B cell (primary cell): ENCODE measurements at regions of chr10 and their contacts with region 1.

Region 1: DNA sequence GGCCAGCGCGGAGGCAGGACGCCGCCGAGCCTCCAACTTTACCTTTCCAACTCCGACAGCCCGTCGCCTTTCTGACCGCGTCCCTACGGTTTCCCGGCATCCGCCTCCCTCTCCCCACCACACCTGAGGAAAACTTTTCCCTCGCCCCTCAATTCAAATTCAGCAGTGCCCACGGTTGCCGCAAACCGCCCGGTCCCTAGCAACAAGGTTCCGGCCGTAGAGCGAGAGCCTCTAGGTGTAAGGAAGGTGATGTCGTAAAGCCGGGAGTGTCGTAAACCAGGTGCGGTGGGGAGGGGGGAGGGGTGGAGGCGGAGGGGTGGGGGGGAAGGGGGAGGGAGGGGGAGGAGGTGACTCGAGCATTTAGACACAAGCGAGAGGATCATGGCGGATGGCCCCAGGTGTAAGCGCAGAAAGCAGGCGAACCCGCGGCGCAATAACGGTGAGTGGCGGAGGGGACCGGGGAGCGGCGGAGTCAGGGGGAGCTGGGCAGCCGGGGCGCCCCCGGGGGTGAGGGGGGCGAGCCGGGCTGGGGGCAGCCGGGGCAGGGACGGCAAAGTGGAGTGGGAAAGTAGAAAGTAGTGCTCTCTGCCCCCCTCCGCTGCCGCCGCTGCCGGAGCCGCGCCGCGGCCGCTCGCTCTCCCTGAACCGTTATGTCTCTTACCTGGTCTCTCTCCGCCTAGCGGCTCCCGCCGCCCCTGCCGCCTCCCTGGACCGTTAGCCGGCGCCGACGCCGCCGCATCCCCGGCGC is at the start of gene ZEB1:
- DNase-seq: peak; percentile 95
- ATAC-seq: peak; percentile 54
- H3K4me3 ChIP-seq: peak within 1 kb of the TSS; percentile 63 to 95 (median 89)
- H3K4me3 Mint-ChIP-seq: peak within 1 kb of the TSS; percentile 96
- H3K27ac ChIP-seq: peak within 1 kb of the TSS; percentile 89 to 97
- H3K27ac Mint-ChIP-seq: peak within 1 kb of the TSS; percentile 98
- H3K4me1 ChIP-seq: peaks cover 13 to 16% of the 10 kb centered on the region in 2 donors
- H3K4me1 Mint-ChIP-seq: peaks cover 36% of the 10 kb centered on the region
- H3K27me3 ChIP-seq: no peaks in the 10 kb centered on the region
- H3K27me3 Mint-ChIP-seq: no peaks in the 10 kb centered on the region
- CTCF ChIP-seq: peak; percentile 29
- total RNA-seq, gene ZEB1: 96.7 and 107 TPM in 2 replicates

Region 2: DNA sequence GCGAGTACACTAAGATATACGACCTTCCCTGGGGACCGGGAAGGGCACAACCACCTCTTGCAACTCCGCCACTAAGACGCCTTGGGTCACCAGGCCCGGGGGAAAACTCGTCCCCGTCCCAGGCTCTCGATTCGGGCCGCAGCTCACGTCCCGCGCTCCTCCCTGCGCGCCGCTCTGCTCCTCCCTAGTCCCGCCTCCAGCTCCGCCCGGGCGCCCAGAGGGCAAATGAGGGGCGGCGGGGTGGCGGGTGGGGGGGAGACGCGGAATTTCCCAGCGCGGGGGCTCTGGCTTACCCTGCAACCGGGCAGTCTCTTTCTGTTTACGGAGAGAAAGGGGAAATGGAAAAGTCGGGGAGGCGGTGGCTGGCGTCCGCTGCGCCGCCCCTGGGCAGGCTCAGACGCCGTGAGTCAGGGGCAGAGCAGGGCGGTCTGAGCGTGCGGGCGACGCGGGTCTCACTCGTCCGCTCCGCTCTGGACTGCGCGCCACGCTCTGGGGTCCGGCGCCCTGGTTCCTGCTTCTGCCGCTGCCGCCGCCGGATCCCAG is 885.2 kb before region 1 on chr10 and contains the start of gene MAP3K8:
- CTCF ChIA-PET with region 1: no interaction called
- POLR2A ChIA-PET with region 1: no interaction called
- intact Hi-C with region 1: loop called (anchors 5 kb)
- DNase-seq: peak; percentile 96
- ATAC-seq: peak; percentile 73
- H3K4me3 ChIP-seq: peak within 1 kb of the TSS; percentile 93 to 99 (median 97)
- H3K4me3 Mint-ChIP-seq: peak within 1 kb of the TSS; percentile 98
- H3K27ac ChIP-seq: peak within 1 kb of the TSS; percentile 95 to 99
- H3K27ac Mint-ChIP-seq: peak within 1 kb of the TSS; percentile 97
- H3K4me1 ChIP-seq: peaks cover 56 to 74% of the 10 kb centered on the region in 2 donors
- H3K4me1 Mint-ChIP-seq: peaks cover 71% of the 10 kb centered on the region
- H3K27me3 ChIP-seq: no peaks in the 10 kb centered on the region
- H3K27me3 Mint-ChIP-seq: no peaks in the 10 kb centered on the region
- CTCF ChIP-seq: no peak
- total RNA-seq, gene MAP3K8: 97.0 and 104 TPM in 2 replicates

Region 3: DNA sequence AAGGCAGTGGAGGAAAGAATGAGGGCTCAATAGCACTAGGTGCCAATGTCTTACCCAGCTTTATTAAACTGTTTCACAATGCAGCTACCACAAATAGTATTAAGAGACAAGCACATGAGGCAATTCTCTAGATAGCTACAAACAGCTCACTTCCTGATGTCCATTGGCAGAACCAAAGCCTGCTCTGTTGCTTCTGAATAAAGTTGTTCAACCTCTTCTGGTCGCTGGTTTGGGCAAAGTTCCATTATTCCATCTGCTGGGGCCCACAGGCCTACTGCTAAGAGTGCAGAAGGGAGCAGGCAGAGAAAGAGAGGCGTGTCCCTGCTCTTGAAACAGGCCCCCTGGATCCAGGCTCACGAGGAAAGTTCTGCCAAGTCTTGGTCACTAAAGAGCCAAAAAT is 461.2 kb before region 1 on chr10:
- CTCF ChIA-PET with region 1: no interaction called
- POLR2A ChIA-PET with region 1: no interaction called
- intact Hi-C with region 1: no loop called
- DNase-seq: no peak
- ATAC-seq: no peak
- H3K4me3 ChIP-seq: no peak overlapping the region
- H3K4me3 Mint-ChIP-seq: no peak overlapping the region
- H3K27ac ChIP-seq: no peak overlapping the region
- H3K27ac Mint-ChIP-seq: no peak overlapping the region
- H3K4me1 ChIP-seq: no peaks in the 10 kb centered on the region
- H3K4me1 Mint-ChIP-seq: no peaks in the 10 kb centered on the region
- H3K27me3 ChIP-seq: no peaks in the 10 kb centered on the region
- H3K27me3 Mint-ChIP-seq: no peaks in the 10 kb centered on the region
- CTCF ChIP-seq: no peak

Region 4: DNA sequence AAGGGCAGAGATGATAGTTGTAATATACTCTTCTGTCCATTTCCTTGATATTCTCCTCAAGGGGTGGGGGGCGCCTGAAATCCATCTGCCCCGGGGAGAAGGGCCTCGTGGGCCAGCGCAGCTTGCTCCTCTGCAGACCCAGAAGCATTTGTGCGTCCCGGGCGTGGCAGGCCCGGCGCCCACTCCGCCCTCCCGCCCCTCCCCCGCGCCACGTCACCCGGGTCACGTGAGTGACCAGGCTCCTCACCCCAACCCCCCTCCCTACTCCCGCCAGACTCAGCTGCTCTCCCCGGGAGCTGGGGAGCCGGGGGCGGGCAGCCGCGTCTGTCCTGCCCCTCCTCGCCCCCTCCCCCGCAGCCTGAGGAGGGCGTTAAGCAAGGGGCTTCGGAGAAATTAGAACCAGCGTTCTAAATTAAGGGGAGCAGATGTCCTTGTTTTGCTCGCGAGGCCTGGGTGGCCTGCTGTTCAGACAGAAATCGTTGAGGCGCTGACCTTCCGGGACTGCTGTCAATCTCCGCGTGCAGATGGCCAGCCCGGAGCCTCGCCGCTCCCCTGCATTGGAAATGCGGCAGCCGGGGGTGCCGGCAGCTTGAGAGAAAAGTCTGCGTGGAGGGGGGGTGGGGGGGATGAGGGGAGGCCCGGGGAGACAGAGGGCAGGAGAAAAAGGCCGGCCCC is 185.3 kb before region 1 on chr10:
- CTCF ChIA-PET with region 1: no interaction called
- POLR2A ChIA-PET with region 1: interaction called, 6 read pairs
- intact Hi-C with region 1: loop called (anchors 1 kb)
- DNase-seq: peak; percentile 84
- ATAC-seq: peak; percentile 79
- H3K4me3 ChIP-seq: peak overlapping the region; percentile 24 to 91 (median 75)
- H3K4me3 Mint-ChIP-seq: peak overlapping the region; percentile 88
- H3K27ac ChIP-seq: peak overlapping the region; percentile 26 to 64
- H3K27ac Mint-ChIP-seq: peak overlapping the region; percentile 63
- H3K4me1 ChIP-seq: peaks cover 8 to 13% of the 10 kb centered on the region in 2 donors
- H3K4me1 Mint-ChIP-seq: peaks cover 24% of the 10 kb centered on the region
- H3K27me3 ChIP-seq: no peaks in the 10 kb centered on the region
- H3K27me3 Mint-ChIP-seq: no peaks in the 10 kb centered on the region
- CTCF ChIP-seq: no peak

Region 5: DNA sequence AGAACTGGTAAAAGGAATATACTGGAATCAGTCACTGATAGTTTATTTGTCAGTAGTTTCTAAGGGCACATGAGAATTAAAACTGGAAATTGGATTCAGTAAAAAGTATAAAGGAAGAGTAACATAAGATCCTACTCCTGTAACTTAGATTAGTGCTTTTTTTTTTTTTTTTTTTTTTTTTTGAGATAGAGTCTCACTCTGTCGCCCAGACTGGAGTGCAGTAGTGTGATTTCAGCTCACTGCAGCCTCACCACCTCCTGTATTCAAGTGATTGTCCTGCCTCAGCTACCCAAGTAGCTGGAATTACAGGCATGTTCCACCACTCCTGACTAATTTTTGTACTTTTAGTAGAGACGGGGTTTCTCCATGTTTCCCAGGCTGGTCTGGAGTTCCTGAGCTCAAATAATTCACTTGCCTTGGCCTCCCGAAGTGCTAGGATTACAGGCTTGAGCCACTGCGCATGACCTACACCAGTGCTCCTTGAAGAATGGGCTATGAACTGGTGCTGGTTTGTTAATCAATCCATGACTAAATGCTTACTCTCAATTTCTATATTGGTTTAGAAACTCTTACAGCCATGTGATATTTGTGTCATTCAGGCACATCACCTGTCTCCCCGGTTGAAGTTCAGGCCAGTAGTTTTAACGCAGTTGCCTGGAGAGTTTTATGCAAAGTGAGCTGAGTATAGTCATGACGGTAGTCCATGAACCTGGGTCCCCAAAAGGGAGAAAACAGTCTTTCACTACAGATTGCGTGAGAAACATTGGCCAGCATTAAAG is 65.0 kb after region 1 on chr10:
- CTCF ChIA-PET with region 1: no interaction called
- POLR2A ChIA-PET with region 1: no interaction called
- intact Hi-C with region 1: no loop called
- DNase-seq: peak; percentile 49
- ATAC-seq: peak; percentile 68
- H3K4me3 ChIP-seq: peak overlapping the region in 1 of 5 experiments; percentile 6
- H3K4me3 Mint-ChIP-seq: peak overlapping the region; percentile 46
- H3K27ac ChIP-seq: no peak overlapping the region
- H3K27ac Mint-ChIP-seq: no peak overlapping the region
- H3K4me1 ChIP-seq: peaks cover 7% of the 10 kb centered on the region in 2 donors
- H3K4me1 Mint-ChIP-seq: peaks cover 24% of the 10 kb centered on the region
- H3K27me3 ChIP-seq: no peaks in the 10 kb centered on the region
- H3K27me3 Mint-ChIP-seq: no peaks in the 10 kb centered on the region
- CTCF ChIP-seq: no peak

Region 6: GRCh38 chr10:31759799-31760626 is 441.0 kb after region 1 on chr10:
- CTCF ChIA-PET with region 1: no interaction called
- POLR2A ChIA-PET with region 1: no interaction called
- intact Hi-C with region 1: loop called (anchors 1 kb)
- DNase-seq: peak; percentile 96
- ATAC-seq: peak; percentile 93
- H3K4me3 ChIP-seq: peak overlapping the region; percentile 71 to 98 (median 94)
- H3K4me3 Mint-ChIP-seq: peak overlapping the region; percentile 92
- H3K27ac ChIP-seq: peak overlapping the region; percentile 85 to 86
- H3K27ac Mint-ChIP-seq: peak overlapping the region; percentile 97
- H3K4me1 ChIP-seq: peaks cover 5 to 14% of the 10 kb centered on the region in 2 donors
- H3K4me1 Mint-ChIP-seq: peaks cover 15% of the 10 kb centered on the region
- H3K27me3 ChIP-seq: no peaks in the 10 kb centered on the region
- H3K27me3 Mint-ChIP-seq: no peaks in the 10 kb centered on the region
- CTCF ChIP-seq: no peak

Region 7: DNA sequence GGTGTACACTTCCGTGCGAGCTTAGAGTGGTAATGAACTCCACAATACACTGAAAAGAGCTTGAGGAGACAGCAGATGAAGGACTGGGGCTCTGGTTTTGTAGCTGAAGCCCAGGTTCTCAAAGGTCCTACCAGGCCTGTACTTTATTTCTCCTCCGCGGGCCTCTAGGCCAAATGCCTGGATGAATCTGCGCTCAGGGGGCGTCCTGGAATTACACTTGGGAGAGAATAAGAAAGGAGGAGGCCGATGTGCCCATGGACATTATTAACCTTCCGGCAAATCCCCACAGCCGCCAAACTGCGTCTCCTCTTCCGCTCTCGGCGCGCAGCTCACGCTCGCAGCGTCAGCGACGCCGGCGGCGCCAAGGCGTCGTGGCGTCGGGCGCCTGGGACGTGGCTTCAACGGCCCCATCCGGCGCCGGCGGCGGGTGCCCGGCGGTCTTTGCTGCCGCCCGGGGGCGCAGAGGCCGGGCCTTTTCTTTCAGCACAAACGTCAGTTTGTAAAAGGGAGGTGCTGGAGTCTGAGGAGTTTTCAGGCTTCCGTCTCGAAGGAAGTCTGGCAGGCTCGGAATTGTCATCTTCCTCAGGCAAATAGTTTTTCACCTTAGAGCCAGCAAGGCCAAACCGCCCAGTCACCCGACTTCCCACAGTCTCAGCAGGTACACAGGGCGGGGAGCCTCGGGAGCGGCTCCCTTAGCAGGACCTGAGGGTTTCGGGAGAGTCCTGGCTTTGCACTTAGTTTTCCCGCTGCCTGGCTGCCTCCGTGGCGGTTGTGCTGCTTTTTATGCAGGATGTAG is 1126.9 kb after region 1 on chr10 and contains the start of gene CCDC7:
- CTCF ChIA-PET with region 1: no interaction called
- POLR2A ChIA-PET with region 1: no interaction called
- intact Hi-C with region 1: loop called (anchors 5 kb)
- DNase-seq: peak; percentile 93
- ATAC-seq: peak; percentile 99
- H3K4me3 ChIP-seq: peak within 1 kb of the TSS; percentile 93 to 99 (median 98)
- H3K4me3 Mint-ChIP-seq: peak within 1 kb of the TSS; percentile 98
- H3K27ac ChIP-seq: peak within 1 kb of the TSS; percentile 95 to 99
- H3K27ac Mint-ChIP-seq: peak within 1 kb of the TSS; percentile 100
- H3K4me1 ChIP-seq: peaks cover 7 to 8% of the 10 kb centered on the region in 2 donors
- H3K4me1 Mint-ChIP-seq: peaks cover 13% of the 10 kb centered on the region
- H3K27me3 ChIP-seq: peaks cover 0 to 4% (median 0%) of the 10 kb centered on the region in 4 experiments
- H3K27me3 Mint-ChIP-seq: peaks cover 16% of the 10 kb centered on the region
- CTCF ChIP-seq: peak; percentile 65
- total RNA-seq, gene CCDC7: 23.5 and 26.6 TPM in 2 replicates